AG04449 (cell line): ENCODE measurements at regions of chr15 and their contacts with region 1.

Region 1: GRCh38 chr15:73936181-73936580 is 9.9 kb downstream of the LOXL1 start:
- DNase-seq: no peak
- H3K4me3 ChIP-seq: no peak overlapping the region
- CTCF ChIP-seq: peak; percentile 14

Region 2: GRCh38 chr15:73950831-73951561 is 14.8 kb after region 1 on chr15:
- CTCF ChIA-PET with region 1: interaction called, 47 read pairs
- POLR2A ChIA-PET with region 1: interaction called, 15 read pairs
- DNase-seq: peak; percentile 91
- H3K4me3 ChIP-seq: no peak overlapping the region
- CTCF ChIP-seq: peak; percentile 93

Region 3: DNA sequence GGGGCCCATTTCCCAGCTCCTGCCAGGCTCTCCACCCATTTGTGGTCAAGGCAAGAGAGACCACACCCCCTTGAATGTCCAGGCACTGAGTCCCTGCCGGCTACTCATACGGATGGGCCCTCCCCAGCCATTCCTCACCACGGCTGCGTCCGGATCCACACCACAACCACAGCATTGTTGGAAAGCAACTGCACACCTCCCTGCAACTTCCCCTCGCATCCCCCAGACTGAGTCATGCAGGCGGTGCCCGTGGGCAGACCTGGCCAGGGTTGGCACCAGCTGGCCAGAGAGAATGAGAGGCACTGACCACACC is 20.5 kb after region 1 on chr15:
- CTCF ChIA-PET with region 1: interaction called, 47 read pairs
- POLR2A ChIA-PET with region 1: interaction called, 15 read pairs
- DNase-seq: peak; percentile 63
- H3K4me3 ChIP-seq: no peak overlapping the region
- CTCF ChIP-seq: no peak